ENCODE measurements at regions of chr10 and their contacts with region 1.

Region 1: GRCh38 chr10:97731346-97732051 is 5.4 kb upstream of the ZFYVE27 start:
- DNase-seq: no peak
- H3K4me3 ChIP-seq: no peak overlapping the region
- H3K27ac ChIP-seq: no peak overlapping the region
- H3K4me1 ChIP-seq: peaks cover 0 to 9% (median 1%) of the 10 kb centered on the region in 6 donors
- H3K27me3 ChIP-seq: peaks cover 0 to 5% (median 0%) of the 10 kb centered on the region in 7 donors
- CTCF ChIP-seq: peak; percentile 70 to 88 (median 83)
- POLR2A ChIP-seq: no peak

Region 2: GRCh38 chr10:97676770-97677581 is 54.5 kb before region 1 on chr10:
- intact Hi-C with region 1: loop called (anchors 5 kb)
- DNase-seq: peak; percentile 81
- H3K4me3 ChIP-seq: no peak overlapping the region
- H3K27ac ChIP-seq: peak overlapping the region in 4 of 8 donors; percentile 7 to 52 (median 22)
- H3K4me1 ChIP-seq: peaks cover 5 to 26% (median 12%) of the 10 kb centered on the region in 6 donors
- H3K27me3 ChIP-seq: no peaks in the 10 kb centered on the region
- CTCF ChIP-seq: peak; percentile 75 to 92 (median 85)
- POLR2A ChIP-seq: no peak

Region 3: DNA sequence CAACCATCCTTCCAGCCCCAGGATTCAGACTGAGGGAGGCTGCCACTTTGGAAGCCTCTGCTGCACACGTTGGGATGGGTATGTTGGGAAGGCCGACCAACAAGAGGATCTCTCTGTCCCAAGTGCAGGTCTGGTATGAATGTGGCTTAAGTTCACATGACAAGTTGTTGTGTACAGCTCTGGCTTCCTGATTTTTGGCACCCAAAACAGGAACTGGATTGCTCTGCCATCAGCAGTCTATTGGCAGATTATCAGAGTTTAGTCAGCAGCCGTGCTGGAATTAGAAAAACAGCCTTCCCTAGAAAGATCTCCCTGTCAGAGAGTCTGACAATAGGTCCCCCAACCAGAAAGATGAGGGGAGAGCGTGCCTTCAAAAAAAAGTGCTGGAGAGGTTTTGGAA is 185.1 kb after region 1 on chr10:
- intact Hi-C with region 1: no loop called
- DNase-seq: no peak
- H3K4me3 ChIP-seq: no peak overlapping the region
- H3K27ac ChIP-seq: no peak overlapping the region
- H3K4me1 ChIP-seq: peaks cover 0 to 7% (median 6%) of the 10 kb centered on the region in 6 donors
- H3K27me3 ChIP-seq: peaks cover 0 to 74% (median 0%) of the 10 kb centered on the region in 7 donors
- CTCF ChIP-seq: no peak
- POLR2A ChIP-seq: no peak